Activated CD8-positive, alpha-beta memory T cell treated with anti-CD3 and anti-CD28 coated beads, Interleukin-2, amount 10 ng/mL, durations not matched to agents 7 days and 5 days (primary cell): ENCODE measurements at regions of chr15 and their contacts with region 1.

Region 1: GRCh38 chr15:38683382-38684242 is 119.0 kb upstream of the RASGRP1 start:
- DNase-seq: peak; percentile 89
- ATAC-seq: peak; percentile 73
- H3K4me3 Mint-ChIP-seq: peak overlapping the region; percentile 37
- H3K27ac Mint-ChIP-seq: peak overlapping the region; percentile 96
- H3K4me1 Mint-ChIP-seq: peaks cover 70% of the 10 kb centered on the region
- H3K27me3 Mint-ChIP-seq: no peaks in the 10 kb centered on the region

Region 2: DNA sequence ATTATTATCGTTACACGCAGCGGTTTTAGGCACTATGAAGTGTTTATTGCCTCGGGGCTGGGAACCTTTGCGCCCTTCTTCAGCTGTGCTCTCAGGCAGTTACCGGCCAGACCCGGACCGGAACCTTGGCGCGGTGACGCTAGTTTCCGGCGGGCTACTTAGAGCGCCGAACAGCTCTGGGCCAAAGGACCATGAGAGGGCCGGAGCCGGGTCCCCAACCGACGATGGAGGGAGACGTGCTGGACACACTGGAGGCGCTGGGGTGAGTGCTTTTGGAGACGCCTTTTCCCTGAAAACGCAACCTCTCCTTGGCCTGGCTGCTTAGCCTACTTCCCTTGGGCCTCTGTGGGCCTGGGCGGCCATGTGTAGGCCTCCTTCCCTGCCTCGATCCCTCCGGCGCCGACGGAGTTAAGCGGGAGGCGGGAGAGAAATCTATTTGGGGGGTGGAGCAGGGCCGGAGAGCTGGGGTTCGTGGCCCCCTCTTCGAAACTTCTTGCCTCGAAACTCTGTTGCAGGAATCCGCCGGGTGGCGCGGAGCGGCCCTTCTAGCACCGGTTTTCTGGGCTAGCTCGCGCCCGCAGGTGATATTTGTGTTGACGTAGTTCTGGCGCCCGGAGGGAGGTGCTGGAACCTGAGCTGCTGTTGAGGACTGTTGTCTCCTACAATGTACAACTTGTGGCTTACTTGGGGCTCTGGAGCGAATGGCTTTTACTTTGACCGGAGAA is 229.5 kb before region 1 on chr15 and contains the start of gene FAM98B:
- CTCF ChIA-PET with region 1: interaction called, 12 read pairs
- DNase-seq: peak; percentile 92
- ATAC-seq: peak; percentile 96
- H3K4me3 Mint-ChIP-seq: peak within 1 kb of the TSS; percentile 94
- H3K27ac Mint-ChIP-seq: peak within 1 kb of the TSS; percentile 92
- H3K4me1 Mint-ChIP-seq: peaks cover 34% of the 10 kb centered on the region
- H3K27me3 Mint-ChIP-seq: peaks cover 15% of the 10 kb centered on the region
- total RNA-seq, gene FAM98B: 34.8 to 41.4 TPM

Region 3: GRCh38 chr15:38474155-38474757 is 209.4 kb before region 1 on chr15:
- CTCF ChIA-PET with region 1: interaction called, 69 read pairs
- DNase-seq: peak; percentile 48
- ATAC-seq: peak; percentile 98
- H3K4me3 Mint-ChIP-seq: no peak overlapping the region
- H3K27ac Mint-ChIP-seq: peak overlapping the region; percentile 30
- H3K4me1 Mint-ChIP-seq: peaks cover 6% of the 10 kb centered on the region
- H3K27me3 Mint-ChIP-seq: no peaks in the 10 kb centered on the region

Region 4: DNA sequence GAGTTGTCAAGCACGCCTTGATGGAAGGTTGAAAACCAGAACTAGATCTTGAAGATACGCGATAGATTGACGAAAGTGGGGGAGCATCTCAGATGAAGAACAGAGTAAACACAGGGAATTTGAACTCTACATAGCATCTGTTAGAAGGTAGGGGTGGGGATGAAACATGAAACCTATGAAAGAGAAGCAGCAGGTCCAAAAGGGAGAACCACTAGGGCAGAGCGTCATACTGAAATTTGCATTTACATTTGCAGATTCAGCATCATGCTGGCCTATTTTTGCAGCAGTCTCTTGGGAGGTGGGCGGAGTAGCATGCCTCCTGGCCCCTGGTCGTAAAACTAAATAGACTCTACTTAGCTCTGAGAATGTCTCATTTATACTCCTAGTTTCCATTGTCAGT is 72.9 kb before region 1 on chr15:
- CTCF ChIA-PET with region 1: interaction called, 28 read pairs
- DNase-seq: peak; percentile 74
- ATAC-seq: peak; percentile 73
- H3K4me3 Mint-ChIP-seq: peak overlapping the region; percentile 53
- H3K27ac Mint-ChIP-seq: peak overlapping the region; percentile 93
- H3K4me1 Mint-ChIP-seq: peaks cover 67% of the 10 kb centered on the region
- H3K27me3 Mint-ChIP-seq: no peaks in the 10 kb centered on the region

Region 5: DNA sequence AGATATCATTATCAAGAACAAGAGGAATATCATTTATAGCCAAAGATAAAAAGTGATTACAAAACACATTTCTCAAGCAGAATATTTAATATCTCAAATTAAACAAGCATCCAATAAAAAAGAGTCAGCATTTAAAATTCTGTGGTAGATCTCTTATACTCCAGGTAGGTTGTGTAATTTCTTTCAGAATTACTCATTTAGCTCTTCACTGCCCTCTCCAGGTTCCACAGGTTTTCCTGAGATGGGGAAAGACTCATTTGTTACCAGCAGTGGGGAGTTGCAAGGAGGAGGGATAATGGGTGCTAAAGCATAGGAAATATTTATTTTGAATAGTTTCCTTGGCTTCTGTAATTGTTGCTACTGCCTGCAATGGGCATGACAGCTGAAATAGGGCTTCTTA is 35.9 kb before region 1 on chr15:
- CTCF ChIA-PET with region 1: interaction called, 102 read pairs
- DNase-seq: no peak
- ATAC-seq: no peak
- H3K4me3 Mint-ChIP-seq: no peak overlapping the region
- H3K27ac Mint-ChIP-seq: no peak overlapping the region
- H3K4me1 Mint-ChIP-seq: peaks cover 58% of the 10 kb centered on the region
- H3K27me3 Mint-ChIP-seq: no peaks in the 10 kb centered on the region

Region 6: DNA sequence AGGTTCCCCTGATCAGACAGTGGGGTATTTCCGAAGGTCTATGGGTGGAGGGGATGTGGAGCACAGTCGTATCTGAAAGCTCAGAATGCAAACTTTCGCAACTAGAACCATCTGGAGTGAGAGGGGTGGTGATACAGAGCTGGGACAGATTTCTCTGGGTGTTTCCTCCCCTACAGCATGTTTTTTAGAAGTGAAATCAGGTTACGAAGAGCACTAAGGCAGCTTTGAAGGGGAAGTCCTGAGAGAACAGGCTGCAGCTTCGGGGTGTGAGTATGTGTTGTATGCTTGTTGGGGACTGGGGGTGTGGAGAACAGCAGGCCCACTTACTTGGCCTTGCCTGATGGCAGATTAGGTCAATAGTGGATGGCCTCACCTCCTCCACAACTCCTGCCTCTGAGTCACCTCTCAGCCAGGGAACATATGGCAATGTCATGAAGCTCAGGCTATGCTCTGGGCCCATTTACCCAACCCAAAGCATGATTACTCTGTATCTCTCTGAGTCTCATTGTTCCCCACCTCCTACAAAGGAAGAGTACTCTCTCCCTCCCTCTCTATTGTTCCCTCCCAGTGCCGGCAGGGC is 11.8 kb before region 1 on chr15:
- CTCF ChIA-PET with region 1: interaction called, 83 read pairs
- DNase-seq: peak; percentile 56
- ATAC-seq: peak; percentile 31
- H3K4me3 Mint-ChIP-seq: peak overlapping the region; percentile 51
- H3K27ac Mint-ChIP-seq: peak overlapping the region; percentile 98
- H3K4me1 Mint-ChIP-seq: peaks cover 80% of the 10 kb centered on the region
- H3K27me3 Mint-ChIP-seq: no peaks in the 10 kb centered on the region